ENCODE measurements at regions of chr14 and their contacts with region 1.

Region 1: DNA sequence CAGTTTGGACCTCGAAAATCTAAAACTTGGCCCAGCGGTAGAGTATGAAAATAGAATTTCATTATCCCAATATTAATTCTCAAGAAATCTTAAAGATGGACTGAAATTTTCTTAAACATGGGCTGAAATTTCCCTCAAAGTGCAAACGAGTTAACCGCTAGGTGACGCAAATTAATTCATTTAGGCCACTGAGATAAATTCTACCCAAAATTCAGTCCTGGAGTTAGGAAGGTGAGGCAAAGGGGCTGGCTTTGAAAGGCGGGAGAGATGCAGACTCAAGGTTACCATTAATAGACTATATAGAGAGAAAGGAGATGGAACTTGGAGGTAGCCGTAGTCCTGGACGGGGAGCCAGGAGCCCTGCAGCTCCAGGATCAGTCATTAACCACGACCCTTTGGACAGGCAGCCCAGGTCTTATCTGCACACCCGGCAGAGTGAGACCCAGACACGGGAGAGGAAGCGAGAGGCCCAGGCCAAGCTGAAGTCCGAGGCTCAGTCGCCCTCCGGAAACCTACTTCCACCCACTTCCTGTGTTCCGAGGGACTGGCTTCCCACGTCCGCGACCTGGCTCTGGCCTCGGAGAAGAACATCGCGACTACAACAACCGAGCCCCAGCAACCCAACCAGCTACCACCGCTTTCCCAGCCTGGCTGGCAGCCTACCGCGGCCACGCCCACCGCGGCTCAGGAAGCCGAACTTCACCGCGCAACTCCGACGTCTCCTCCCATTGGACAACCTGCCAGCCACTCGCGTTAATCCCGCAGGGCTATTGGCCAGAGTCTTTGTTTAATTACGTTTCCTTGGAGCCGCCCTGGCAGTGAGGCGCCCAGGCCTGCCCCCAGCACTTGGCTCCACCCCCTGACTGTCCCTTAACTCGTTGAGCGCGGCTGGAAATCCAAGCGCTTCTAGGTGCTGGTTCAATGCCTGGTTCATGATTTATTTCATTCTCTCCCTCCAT is at the start of gene EFCAB11:
- DNase-seq: peak; percentile 97
- H3K4me3 Mint-ChIP-seq: peak within 1 kb of the TSS; percentile 95
- H3K27ac Mint-ChIP-seq: peak within 1 kb of the TSS; percentile 100
- H3K4me1 Mint-ChIP-seq: peaks cover 42% of the 10 kb centered on the region
- H3K27me3 Mint-ChIP-seq: no peaks in the 10 kb centered on the region
- total RNA-seq, gene EFCAB11: 9.6 to 9.9 TPM

Region 2: GRCh38 chr14:89509891-89510290 is 444.5 kb before region 1 on chr14:
- CTCF ChIA-PET with region 1: no interaction called
- POLR2A ChIA-PET with region 1: interaction called, 10 read pairs
- DNase-seq: no peak
- H3K4me3 Mint-ChIP-seq: no peak overlapping the region
- H3K27ac Mint-ChIP-seq: peak overlapping the region; percentile 95
- H3K4me1 Mint-ChIP-seq: peaks cover 59% of the 10 kb centered on the region
- H3K27me3 Mint-ChIP-seq: no peaks in the 10 kb centered on the region

Region 3: DNA sequence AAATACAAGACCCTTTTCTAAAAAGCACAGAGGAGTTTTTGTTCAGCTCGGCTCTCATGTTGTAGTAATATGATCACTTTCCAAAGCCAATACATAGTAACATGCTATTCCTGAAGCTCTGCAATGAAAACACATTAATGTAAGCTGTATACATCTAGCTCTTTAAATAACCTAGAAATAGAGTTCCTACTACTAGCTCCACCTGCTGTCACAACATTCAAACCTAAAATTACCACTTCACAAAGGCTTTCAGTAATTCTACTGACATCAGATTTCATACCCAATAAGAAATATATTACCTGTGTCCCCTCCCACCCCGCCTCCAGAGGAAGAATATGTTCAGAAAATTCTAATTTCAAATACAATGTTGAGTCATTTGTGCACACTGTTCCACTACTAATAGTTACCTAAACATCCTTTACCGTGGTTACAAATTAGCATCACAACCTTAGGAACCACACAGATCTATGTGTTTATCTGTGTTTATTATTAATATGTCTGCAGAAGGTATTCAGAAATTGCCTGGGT is 17.6 kb before region 1 on chr14:
- CTCF ChIA-PET with region 1: interaction called, 15 read pairs
- POLR2A ChIA-PET with region 1: interaction called, 10 read pairs
- DNase-seq: no peak
- H3K4me3 Mint-ChIP-seq: no peak overlapping the region
- H3K27ac Mint-ChIP-seq: no peak overlapping the region
- H3K4me1 Mint-ChIP-seq: no peaks in the 10 kb centered on the region
- H3K27me3 Mint-ChIP-seq: no peaks in the 10 kb centered on the region

Region 4: GRCh38 chr14:89965839-89966238 is 11.5 kb after region 1 on chr14:
- CTCF ChIA-PET with region 1: interaction called, 125 read pairs
- POLR2A ChIA-PET with region 1: interaction called, 33 read pairs
- DNase-seq: no peak
- H3K4me3 Mint-ChIP-seq: no peak overlapping the region
- H3K27ac Mint-ChIP-seq: no peak overlapping the region
- H3K4me1 Mint-ChIP-seq: peaks cover 20% of the 10 kb centered on the region
- H3K27me3 Mint-ChIP-seq: no peaks in the 10 kb centered on the region

Region 5: GRCh38 chr14:90383075-90383730 is 428.9 kb after region 1 on chr14:
- CTCF ChIA-PET with region 1: no interaction called
- POLR2A ChIA-PET with region 1: interaction called, 10 read pairs
- DNase-seq: peak; percentile 99
- H3K4me3 Mint-ChIP-seq: no peak overlapping the region
- H3K27ac Mint-ChIP-seq: no peak overlapping the region
- H3K4me1 Mint-ChIP-seq: peaks cover 20% of the 10 kb centered on the region
- H3K27me3 Mint-ChIP-seq: no peaks in the 10 kb centered on the region

Measured in activated CD4-positive, alpha-beta memory T cell treated with anti-CD3 and anti-CD28 coated beads, Interleukin-2, amount 10 ng/mL, durations not matched to agents 7 days and 5 days (primary cell).